HCT116 (cell line): ENCODE measurements at regions of chr16 and their contacts with region 1.

Region 1: DNA sequence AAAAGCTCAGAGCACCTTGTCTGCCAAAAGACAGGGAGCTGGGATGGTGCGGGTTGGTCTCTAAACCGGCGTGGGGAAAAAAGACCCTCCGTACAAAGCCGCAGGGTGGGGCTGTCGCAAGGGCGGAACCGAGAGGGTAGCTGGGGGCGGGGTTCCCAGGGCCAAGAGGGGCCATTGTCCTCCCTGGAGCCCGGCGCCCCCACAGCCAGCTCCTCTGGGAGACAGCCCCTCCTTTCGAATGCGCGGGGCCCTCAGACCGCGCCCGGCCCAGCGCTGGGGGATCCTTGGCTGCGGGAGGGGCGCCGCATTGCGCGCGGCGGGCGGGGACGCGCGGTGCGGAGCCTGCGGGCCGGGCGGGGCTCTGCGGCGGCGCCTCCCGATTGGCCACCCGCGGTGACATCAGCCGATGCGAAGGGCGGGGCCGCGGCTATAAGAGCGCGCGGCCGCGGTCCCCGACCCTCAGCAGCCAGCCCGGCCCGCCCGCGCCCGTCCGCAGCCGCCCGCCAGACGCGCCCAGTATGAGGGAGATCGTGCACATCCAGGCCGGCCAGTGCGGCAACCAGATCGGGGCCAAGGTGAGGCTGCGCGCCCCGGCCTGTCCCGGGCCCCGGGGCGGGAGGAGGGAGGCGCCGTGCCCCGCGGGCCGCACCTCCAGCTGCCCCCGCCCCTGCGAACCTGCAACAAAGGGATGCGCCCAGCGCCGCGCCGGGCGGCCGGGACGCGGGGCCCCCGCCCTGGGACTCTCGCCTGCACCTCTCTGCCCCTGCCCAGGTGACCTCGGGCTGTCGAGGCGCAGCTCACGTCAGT is at the start of gene TUBB3:
- DNase-seq: peak; percentile 56
- ATAC-seq: peak; percentile 59
- H3K4me3 ChIP-seq: peak within 1 kb of the TSS; percentile 74 to 91
- H3K27ac ChIP-seq: peak within 1 kb of the TSS; percentile 100
- H3K4me1 ChIP-seq: peaks cover 39 to 76% of the 10 kb centered on the region in 2 experiments
- H3K27me3 ChIP-seq: no peaks in the 10 kb centered on the region
- CTCF ChIP-seq: peak in 2 of 3 experiments; percentile 16 to 17; a peak in 2 of 6 replicates
- POLR2A ChIP-seq: peak; percentile 99
- RAD21 ChIP-seq: no peak
- total RNA-seq, gene TUBB3: 173 TPM

Region 2: GRCh38 chr16:89615596-89616090 is 307.4 kb before region 1 on chr16:
- CTCF ChIA-PET with region 1: no interaction called
- POLR2A ChIA-PET with region 1: no interaction called
- RAD21 ChIA-PET with region 1: no interaction called
- intact Hi-C with region 1: no loop called
- DNase-seq: no peak
- ATAC-seq: peak; percentile 85
- H3K4me3 ChIP-seq: no peak overlapping the region
- H3K27ac ChIP-seq: no peak overlapping the region
- H3K4me1 ChIP-seq: peaks cover 7 to 15% of the 10 kb centered on the region in 2 experiments; a peak in 3 of 4 replicates
- H3K27me3 ChIP-seq: no peaks in the 10 kb centered on the region
- CTCF ChIP-seq: peak; percentile 77 to 94 (median 93)
- POLR2A ChIP-seq: no peak
- RAD21 ChIP-seq: no peak; the same call in 1 of the 2 replicates

Region 3: DNA sequence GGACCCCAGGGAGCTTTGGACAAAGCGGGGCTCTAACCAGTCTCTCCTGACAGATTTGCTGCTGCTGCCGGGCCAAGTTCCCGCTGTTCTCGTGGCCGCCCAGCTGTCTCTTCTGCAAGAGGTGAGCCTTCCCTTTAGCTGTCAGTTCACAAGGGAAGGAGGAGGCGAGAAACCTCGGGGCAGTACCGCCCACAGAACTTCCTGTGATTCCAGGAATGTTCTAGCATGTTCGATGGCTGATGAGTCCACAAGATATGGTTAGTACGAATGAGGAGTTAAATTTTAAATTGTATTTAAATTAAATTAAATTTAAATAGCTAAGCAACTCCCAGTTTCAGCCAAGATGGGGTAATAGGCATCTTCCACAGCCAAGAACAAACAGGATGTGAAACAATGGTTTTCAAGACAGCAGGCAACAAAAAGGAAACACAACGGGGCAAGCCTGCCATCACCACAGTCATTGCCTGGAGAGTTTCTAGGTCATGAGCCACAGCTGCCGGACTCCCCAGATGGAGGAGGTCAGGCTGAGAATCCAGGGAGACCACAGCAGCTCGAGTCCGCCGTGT is 59.3 kb before region 1 on chr16:
- CTCF ChIA-PET with region 1: no interaction called
- POLR2A ChIA-PET with region 1: no interaction called
- RAD21 ChIA-PET with region 1: no interaction called
- intact Hi-C with region 1: no loop called
- DNase-seq: no peak
- ATAC-seq: no peak
- H3K4me3 ChIP-seq: no peak overlapping the region
- H3K27ac ChIP-seq: no peak overlapping the region
- H3K4me1 ChIP-seq: peaks cover 8 to 9% of the 10 kb centered on the region in 2 experiments
- H3K27me3 ChIP-seq: no peaks in the 10 kb centered on the region
- CTCF ChIP-seq: no peak
- POLR2A ChIP-seq: no peak
- RAD21 ChIP-seq: no peak

Region 4: DNA sequence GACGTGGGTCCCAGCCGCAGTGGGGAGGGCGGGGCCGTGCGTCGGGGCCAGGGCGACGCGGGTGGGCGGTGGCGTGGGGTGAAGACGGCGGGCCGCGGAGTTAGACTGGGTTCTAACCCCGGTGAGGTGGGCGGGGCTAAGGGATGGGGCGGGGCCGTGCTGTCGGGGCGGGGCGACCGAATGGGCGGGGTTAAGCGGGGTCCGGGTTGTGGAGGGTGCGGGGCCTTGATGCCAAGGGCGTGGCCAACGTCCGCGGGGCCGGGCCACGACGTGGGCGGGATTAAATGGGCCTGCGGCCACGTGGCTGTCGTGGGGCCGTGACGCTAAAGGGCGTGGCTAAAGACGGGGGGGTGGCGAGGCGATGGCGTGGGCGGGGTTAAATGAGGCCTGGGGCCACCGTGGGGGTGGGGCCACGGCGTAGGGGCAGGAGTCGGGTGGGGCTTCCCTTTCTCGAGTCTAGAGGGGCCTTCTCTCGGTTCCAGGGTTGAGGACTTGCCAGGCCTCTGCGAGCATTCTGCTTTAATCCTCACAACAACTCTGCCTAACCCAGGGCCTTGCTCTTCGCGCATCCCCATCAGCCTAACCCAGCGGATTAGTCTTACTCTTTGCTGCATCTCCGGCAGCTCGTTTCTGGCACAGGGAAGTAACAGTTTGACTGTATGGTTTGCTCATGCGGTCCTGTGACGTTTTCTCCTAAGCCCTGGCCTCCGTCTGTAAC is 49.0 kb before region 1 on chr16:
- CTCF ChIA-PET with region 1: interaction called, 3 read pairs
- POLR2A ChIA-PET with region 1: interaction called, 16 read pairs
- RAD21 ChIA-PET with region 1: interaction called in 1 of 2 experiments, 4 read pairs
- intact Hi-C with region 1: loop called (anchors 5 kb)
- DNase-seq: peak; percentile 94
- ATAC-seq: peak; percentile 76
- H3K4me3 ChIP-seq: peak overlapping the region; percentile 87 to 91
- H3K27ac ChIP-seq: peak overlapping the region; percentile 100
- H3K4me1 ChIP-seq: peaks cover 12 to 23% of the 10 kb centered on the region in 2 experiments
- H3K27me3 ChIP-seq: no peaks in the 10 kb centered on the region
- CTCF ChIP-seq: no peak
- POLR2A ChIP-seq: no peak
- RAD21 ChIP-seq: no peak

Region 5: GRCh38 chr16:89909777-89910716 is 13.0 kb before region 1 on chr16:
- CTCF ChIA-PET with region 1: interaction called, 57 read pairs
- POLR2A ChIA-PET with region 1: interaction called, 22 read pairs
- RAD21 ChIA-PET with region 1: no interaction called
- intact Hi-C with region 1: no loop called
- DNase-seq: peak; percentile 42
- ATAC-seq: peak; percentile 86
- H3K4me3 ChIP-seq: no peak overlapping the region
- H3K27ac ChIP-seq: peak overlapping the region; percentile 12; the same call in 1 of the 2 replicates
- H3K4me1 ChIP-seq: peaks cover 4 to 11% of the 10 kb centered on the region in 2 experiments; a peak in 3 of 4 replicates
- H3K27me3 ChIP-seq: no peaks in the 10 kb centered on the region
- CTCF ChIP-seq: peak in 2 of 3 experiments; percentile 99 to 100; a peak in 4 of 6 replicates
- POLR2A ChIP-seq: no peak
- RAD21 ChIP-seq: no peak

Region 6: DNA sequence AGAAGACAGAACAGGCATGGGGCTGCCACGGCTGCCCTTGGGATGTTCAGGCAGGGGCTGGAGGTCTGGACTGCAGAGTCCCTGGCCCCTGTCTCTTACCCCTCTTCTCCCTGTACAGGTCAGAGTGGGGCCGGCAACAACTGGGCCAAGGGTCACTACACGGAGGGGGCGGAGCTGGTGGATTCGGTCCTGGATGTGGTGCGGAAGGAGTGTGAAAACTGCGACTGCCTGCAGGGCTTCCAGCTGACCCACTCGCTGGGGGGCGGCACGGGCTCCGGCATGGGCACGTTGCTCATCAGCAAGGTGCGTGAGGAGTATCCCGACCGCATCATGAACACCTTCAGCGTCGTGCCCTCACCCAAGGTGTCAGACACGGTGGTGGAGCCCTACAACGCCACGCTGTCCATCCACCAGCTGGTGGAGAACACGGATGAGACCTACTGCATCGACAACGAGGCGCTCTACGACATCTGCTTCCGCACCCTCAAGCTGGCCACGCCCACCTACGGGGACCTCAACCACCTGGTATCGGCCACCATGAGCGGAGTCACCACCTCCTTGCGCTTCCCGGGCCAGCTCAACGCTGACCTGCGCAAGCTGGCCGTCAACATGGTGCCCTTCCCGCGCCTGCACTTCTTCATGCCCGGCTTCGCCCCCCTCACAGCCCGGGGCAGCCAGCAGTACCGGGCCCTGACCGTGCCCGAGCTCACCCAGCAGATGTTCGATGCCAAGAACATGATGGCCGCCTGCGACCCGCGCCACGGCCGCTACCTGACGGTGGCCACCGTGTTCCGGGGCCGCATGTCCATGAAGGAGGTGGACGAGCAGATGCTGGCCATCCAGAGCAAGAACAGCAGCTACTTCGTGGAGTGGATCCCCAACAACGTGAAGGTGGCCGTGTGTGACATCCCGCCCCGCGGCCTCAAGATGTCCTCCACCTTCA is 11.8 kb after region 1 on chr16:
- CTCF ChIA-PET with region 1: no interaction called
- POLR2A ChIA-PET with region 1: interaction called, 20 read pairs
- RAD21 ChIA-PET with region 1: no interaction called
- intact Hi-C with region 1: no loop called
- DNase-seq: no peak
- ATAC-seq: no peak
- H3K4me3 ChIP-seq: no peak overlapping the region
- H3K27ac ChIP-seq: no peak overlapping the region
- H3K4me1 ChIP-seq: peaks cover 0 to 7% of the 10 kb centered on the region in 2 experiments; a peak in 1 of 4 replicates
- H3K27me3 ChIP-seq: no peaks in the 10 kb centered on the region
- CTCF ChIP-seq: no peak
- POLR2A ChIP-seq: no peak
- RAD21 ChIP-seq: no peak

Region 7: DNA sequence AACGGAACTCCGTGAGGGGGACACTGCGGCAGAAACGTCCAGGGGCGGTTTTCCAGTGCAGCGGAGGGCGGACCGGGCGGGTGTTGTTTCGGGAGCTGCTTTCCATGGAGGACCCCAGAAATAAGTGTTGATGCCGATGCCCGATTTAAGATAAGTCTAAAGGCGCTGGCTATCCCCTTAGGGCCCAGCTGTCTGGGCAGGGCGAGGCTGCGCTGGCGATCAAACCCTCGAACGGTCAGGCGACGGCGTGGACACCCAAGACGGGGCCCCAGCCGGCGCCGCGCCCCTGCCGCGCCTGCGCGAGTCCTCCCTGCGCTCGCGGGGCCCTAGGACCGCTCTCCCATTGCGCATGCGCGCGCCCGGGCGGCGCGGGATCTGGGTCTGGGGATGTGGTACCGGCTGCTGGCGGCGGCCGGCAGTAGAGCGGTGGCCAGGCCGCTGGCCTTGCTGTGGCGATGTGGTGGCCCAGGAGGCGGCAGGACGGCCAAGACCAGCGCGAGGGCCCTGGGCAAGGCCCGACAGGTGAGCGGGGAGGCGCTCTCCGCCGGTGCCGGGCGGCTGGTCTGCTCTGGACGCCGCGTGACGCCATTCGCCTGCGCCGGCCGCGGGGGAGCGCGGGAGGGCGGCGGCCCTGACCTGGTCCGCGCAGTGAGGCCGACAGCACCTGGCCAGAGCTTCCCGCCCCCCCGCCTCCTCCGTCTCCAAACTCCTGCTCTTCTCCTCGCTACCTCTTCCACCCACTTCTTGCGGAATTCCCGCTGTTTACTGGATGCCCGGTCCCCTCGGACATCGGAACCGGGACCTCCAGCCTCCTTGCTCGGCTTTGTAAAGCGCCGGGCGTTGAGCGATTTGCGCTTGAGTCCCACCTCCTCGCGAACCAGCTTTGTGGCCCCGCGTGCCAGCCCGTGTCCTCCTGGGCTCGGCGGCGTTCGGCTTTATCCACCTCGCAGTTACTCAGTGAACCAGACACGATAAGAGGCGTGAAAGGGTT is 49.5 kb after region 1 on chr16:
- CTCF ChIA-PET with region 1: no interaction called
- POLR2A ChIA-PET with region 1: interaction called, 21 read pairs
- RAD21 ChIA-PET with region 1: no interaction called
- intact Hi-C with region 1: no loop called
- DNase-seq: peak; percentile 88
- ATAC-seq: peak; percentile 94
- H3K4me3 ChIP-seq: peak overlapping the region; percentile 93 to 98
- H3K27ac ChIP-seq: peak overlapping the region; percentile 81
- H3K4me1 ChIP-seq: peaks cover 11 to 21% of the 10 kb centered on the region in 2 experiments; a peak in 3 of 4 replicates
- H3K27me3 ChIP-seq: no peaks in the 10 kb centered on the region
- CTCF ChIP-seq: 0 out of 6 replicates have a peak, but pooled peaks of 1 of the 3 experiments have one; percentile 1
- POLR2A ChIP-seq: peak; percentile 81
- RAD21 ChIP-seq: no peak

Region 8: DNA sequence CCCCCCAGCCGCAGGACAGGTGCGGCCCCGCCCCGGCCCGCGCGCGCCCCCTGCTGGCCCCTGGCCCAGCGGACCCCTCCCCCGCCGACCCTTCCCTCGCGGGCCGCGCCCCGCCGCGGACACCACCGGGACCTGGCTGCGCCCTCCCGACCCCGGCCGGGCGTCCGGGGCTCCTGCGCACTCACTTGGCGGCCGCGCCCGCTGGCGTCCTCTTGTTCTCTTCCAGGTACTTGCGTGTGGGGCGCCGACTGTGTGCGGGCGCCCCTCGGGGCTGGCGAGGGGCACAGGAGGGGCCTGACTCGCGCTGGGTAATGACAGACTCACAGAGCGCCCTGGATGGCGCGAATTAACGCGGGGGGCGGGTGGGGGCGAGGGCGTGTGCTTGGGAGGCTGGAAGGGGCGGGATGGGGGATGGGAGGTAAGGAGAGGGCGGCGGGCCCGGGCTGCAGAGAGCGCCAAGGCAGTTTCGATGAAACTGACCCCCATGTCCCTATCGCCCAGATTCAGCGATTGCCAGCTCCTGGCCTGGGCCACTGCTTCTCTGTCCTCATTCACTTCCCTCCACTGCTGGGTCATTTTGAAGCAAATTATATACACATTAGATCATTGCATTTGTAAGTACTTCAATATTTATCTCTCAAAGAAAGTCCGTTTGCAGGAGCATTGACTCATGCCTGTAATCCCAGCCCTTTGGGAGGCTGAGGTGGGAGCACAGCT is 96.6 kb after region 1 on chr16:
- CTCF ChIA-PET with region 1: interaction called, 5 read pairs
- POLR2A ChIA-PET with region 1: interaction called, 10 read pairs
- RAD21 ChIA-PET with region 1: no interaction called
- intact Hi-C with region 1: no loop called
- DNase-seq: no peak
- ATAC-seq: peak; percentile 65
- H3K4me3 ChIP-seq: peak overlapping the region; percentile 66 to 85
- H3K27ac ChIP-seq: peak overlapping the region; percentile 78
- H3K4me1 ChIP-seq: peaks cover 32 to 45% of the 10 kb centered on the region in 2 experiments
- H3K27me3 ChIP-seq: no peaks in the 10 kb centered on the region
- CTCF ChIP-seq: peak in 2 of 3 experiments; percentile 33 to 45; a peak in 4 of 6 replicates
- POLR2A ChIP-seq: no peak
- RAD21 ChIP-seq: no peak